IMR-90 (cell line): ENCODE measurements at regions of chr9 and their contacts with region 1.

Region 1: DNA sequence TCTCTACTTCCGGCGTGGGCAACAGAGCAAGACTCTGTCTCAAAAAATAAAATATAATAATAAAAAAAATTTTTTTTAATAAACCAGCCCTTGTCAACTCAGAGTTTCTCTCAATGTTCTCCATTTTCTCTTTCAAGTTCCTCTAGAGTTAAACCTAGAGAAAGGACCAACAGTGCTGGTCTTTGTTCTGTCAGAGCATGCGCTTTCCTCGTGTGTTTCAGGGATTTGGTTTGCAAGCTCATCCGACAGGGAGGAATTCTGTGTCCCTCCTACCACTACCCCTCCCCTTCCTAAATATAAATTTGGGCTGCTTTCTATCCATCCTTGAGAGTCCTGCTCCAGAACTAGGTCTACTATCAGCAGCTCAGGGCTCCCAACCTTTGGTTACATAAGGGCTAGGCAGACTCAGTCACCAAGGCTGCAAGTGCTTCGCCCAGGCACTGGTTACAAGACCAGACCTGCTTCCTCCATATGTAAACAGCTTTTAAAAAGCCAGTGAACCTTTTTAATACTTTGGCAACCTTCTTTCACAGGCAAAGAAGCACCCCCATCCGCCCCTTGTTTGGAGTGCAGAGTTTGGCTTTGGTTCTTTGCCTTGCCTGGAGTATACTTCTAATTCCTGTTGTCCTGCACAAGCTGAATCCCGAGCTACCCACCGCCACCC is 13.5 kb downstream of the SETX start:
- DNase-seq: no peak
- ATAC-seq: no peak
- H3K4me3 ChIP-seq: no peak overlapping the region
- H3K27ac ChIP-seq: no peak overlapping the region
- H3K4me1 ChIP-seq: no peaks in the 10 kb centered on the region
- H3K27me3 ChIP-seq: no peaks in the 10 kb centered on the region
- CTCF ChIP-seq: no peak
- POLR2A ChIP-seq: no peak
- RAD21 ChIP-seq: no peak

Region 2: GRCh38 chr9:132299221-132299620 is 42.1 kb before region 1 on chr9:
- CTCF ChIA-PET with region 1: no interaction called
- POLR2A ChIA-PET with region 1: no interaction called
- dilution Hi-C with region 1: no loop called
- in situ Hi-C with region 1: no loop called
- intact Hi-C with region 1: loop called (anchors 5 kb)
- DNase-seq: no peak
- ATAC-seq: no peak
- H3K4me3 ChIP-seq: no peak overlapping the region
- H3K27ac ChIP-seq: no peak overlapping the region
- H3K4me1 ChIP-seq: peaks cover 4% of the 10 kb centered on the region
- H3K27me3 ChIP-seq: no peaks in the 10 kb centered on the region
- CTCF ChIP-seq: no peak
- POLR2A ChIP-seq: no peak
- RAD21 ChIP-seq: no peak